PC-3 (cell line): ENCODE measurements at regions of chr9 and their contacts with region 1.

Region 1: DNA sequence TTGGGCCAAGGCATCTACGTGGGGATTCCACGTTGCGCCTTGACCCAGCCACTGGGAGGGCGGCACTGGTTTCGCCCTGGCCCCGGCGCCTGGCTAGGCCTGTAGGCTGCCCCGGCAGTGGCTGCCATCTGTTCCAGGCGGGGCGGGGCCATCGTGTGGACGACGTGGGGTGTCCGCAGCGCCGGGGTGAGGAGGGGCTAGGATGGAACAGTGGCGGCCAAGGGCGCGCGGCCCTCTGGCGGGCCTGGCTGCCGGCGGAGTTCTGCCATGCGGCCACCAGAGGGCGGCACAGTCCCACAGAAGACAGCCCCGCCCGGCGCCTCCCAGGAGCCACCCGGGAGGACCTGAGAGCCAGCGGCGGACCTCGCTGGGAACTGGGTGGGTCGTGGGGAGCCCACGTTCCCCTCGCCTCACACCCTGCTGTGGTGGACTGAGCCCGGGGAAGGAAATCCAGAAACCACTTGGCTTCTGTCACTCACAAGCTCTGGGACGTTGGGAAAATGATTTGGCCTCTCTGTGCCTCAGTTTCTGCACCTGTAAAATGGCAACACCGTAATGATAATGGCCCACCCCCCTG is 22.6 kb upstream of the RAPGEF1 start:
- DNase-seq: peak; percentile 58
- ATAC-seq: peak; percentile 88
- H3K4me3 ChIP-seq: no peak overlapping the region
- H3K27ac ChIP-seq: no peak overlapping the region
- H3K4me1 ChIP-seq: 0 out of 2 replicates have a peak, but pooled peaks cover 3% of the 10 kb centered on the region
- H3K27me3 ChIP-seq: peaks cover 16% of the 10 kb centered on the region
- CTCF ChIP-seq: peak; percentile 78

Region 2: DNA sequence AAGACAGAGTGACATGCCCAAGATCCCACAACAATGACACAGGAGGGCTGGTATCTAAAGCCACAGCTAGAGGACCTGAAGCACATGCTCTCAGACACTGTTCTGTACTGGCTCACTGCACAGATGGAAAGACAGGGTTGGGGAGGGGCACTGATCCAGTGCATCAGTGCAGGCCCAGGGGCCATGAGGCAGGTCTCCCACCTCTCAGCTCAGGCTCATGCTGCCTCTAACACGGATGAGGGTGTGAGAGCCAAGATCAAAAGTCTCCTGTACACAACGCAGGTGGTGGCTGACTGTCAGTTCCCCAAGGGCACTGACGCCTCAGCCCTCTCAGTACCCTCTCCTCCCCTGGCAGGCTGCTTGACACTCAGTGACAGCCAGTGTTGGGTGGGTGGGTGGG is 33.5 kb before region 1 on chr9:
- CTCF ChIA-PET with region 1: no interaction called
- POLR2A ChIA-PET with region 1: no interaction called
- intact Hi-C with region 1: no loop called
- DNase-seq: no peak
- ATAC-seq: no peak
- H3K4me3 ChIP-seq: no peak overlapping the region
- H3K27ac ChIP-seq: no peak overlapping the region
- H3K4me1 ChIP-seq: peaks cover 29% of the 10 kb centered on the region
- H3K27me3 ChIP-seq: no peaks in the 10 kb centered on the region
- CTCF ChIP-seq: no peak

Region 3: DNA sequence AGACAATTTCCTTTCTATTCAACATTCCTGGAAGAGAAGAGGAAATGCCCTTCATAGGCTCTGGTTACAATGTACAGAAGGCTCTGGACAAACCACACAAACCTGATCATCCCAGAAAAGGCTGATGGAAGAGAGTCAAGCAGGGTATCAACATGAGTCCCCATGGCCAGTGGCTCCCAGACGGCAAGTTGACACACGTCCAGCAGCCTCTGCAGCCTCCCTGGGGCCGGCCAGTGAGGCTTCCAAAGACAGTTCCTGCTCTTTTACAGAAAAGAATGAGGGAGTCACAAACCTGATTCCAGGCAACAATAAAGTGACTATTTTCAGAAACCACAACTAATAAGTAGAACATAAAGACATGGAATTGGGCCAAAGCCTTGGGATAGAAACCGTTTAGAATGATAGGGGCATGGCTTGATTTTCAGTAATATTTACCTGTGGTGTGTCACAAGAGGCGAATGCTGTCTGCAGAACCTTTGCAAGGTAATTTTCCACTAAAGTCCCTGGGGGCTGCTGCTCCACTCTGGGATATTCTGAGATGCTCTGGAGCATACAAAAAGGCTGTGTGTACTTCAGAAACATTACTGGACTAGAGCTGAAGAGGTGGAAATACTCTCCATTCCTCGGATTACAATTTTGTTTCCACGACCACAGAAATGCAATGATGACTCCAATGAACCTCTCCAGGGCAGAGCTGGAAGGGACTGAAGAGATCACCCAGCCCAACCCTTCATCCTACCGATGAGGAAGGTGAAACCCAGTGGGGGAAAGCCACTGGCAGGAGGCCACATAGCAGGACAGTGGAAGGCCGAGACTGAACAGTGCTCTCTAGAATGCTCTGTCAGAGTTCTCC is 306.8 kb after region 1 on chr9:
- CTCF ChIA-PET with region 1: no interaction called
- POLR2A ChIA-PET with region 1: no interaction called
- intact Hi-C with region 1: no loop called
- DNase-seq: peak; percentile 21
- ATAC-seq: no peak; the same call in 1 of the 2 replicates
- H3K4me3 ChIP-seq: no peak overlapping the region
- H3K27ac ChIP-seq: no peak overlapping the region
- H3K4me1 ChIP-seq: no peaks in the 10 kb centered on the region
- H3K27me3 ChIP-seq: no peaks in the 10 kb centered on the region
- CTCF ChIP-seq: no peak

Region 4: DNA sequence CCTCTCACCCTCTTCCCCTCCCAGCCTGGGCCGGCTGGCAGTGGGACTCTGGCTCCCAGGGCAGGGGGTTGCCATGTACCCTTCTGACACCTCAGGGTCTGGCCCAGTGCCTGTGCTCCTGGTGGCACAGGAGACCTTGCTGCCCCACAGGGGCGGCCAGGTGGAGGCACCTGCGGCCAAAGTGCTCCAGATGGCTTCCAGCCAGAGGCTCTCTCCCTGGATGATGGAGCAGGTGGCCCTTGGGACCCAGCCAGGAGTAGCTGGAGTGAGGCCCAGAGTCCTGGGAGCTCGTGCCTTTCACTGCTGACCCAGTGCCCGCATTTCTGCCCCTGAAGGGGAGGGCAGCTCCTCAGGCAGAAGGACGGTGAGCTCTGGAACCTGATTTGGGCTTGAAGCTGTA is 486.7 kb after region 1 on chr9:
- CTCF ChIA-PET with region 1: no interaction called
- POLR2A ChIA-PET with region 1: no interaction called
- intact Hi-C with region 1: loop called (anchors 2 kb)
- DNase-seq: peak; percentile 17
- ATAC-seq: no peak
- H3K4me3 ChIP-seq: no peak overlapping the region
- H3K27ac ChIP-seq: no peak overlapping the region
- H3K4me1 ChIP-seq: no peaks in the 10 kb centered on the region
- H3K27me3 ChIP-seq: no peaks in the 10 kb centered on the region
- CTCF ChIP-seq: no peak

Region 5: DNA sequence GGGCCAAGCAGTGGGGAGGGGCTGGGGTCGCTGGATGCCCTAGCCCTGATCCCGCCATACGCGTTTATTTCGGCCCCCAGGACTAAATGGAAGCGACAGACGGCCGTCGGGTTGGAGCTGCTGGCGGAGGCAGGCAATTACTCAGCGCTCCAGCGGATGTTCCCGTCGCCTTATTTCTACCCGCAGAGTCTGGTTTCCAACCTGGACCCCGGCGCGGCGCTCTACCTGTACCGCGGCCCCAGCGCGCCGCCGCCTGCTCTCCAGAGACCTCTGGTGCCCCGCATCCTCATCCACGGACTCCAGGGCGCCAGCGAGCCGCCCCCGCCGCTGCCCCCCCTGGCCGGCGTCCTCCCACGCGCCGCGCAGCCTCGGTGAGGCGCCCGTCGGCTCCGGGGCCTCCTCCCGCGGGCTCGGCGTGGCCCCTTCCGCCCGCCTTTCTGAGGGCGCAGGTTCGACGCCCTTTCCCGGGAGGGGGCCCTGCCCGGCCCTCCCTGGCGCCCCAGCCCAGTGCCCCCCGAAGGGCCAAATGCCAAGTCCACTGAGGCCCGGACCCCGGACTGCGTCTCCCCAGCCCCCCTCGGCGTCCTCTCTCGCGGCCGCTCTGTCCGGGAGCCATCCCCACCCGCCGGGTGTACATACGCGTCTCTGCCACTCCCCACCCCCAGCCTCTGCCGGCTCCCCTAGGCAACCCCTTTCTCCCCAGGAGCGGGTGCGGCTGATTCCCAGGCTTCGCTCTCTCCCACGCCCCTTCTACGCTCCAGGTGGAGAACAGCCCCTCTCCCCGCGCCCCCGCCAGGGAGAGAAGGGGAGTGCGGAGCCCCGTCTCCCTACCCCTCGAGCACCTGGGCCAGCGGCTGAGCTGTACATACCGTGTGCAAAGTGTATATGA is 826.9 kb after region 1 on chr9:
- CTCF ChIA-PET with region 1: no interaction called
- POLR2A ChIA-PET with region 1: no interaction called
- intact Hi-C with region 1: no loop called
- DNase-seq: no peak
- ATAC-seq: no peak
- H3K4me3 ChIP-seq: no peak overlapping the region
- H3K27ac ChIP-seq: no peak overlapping the region
- H3K4me1 ChIP-seq: no peaks in the 10 kb centered on the region
- H3K27me3 ChIP-seq: no peaks in the 10 kb centered on the region
- CTCF ChIP-seq: no peak